IMR-90 (cell line): ENCODE measurements at regions of chr15 and their contacts with region 1.

Region 1: GRCh38 chr15:79989682-79990081 is 18.7 kb upstream of the BCL2A1 start:
- DNase-seq: peak; percentile 49
- ATAC-seq: peak; percentile 35; the same call in 1 of the 2 replicates
- H3K4me3 ChIP-seq: no peak overlapping the region
- H3K27ac ChIP-seq: no peak overlapping the region
- H3K4me1 ChIP-seq: no peaks in the 10 kb centered on the region
- H3K27me3 ChIP-seq: no peaks in the 10 kb centered on the region; the same call in 1 of the 2 replicates
- CTCF ChIP-seq: no peak
- POLR2A ChIP-seq: no peak
- RAD21 ChIP-seq: no peak

Region 2: DNA sequence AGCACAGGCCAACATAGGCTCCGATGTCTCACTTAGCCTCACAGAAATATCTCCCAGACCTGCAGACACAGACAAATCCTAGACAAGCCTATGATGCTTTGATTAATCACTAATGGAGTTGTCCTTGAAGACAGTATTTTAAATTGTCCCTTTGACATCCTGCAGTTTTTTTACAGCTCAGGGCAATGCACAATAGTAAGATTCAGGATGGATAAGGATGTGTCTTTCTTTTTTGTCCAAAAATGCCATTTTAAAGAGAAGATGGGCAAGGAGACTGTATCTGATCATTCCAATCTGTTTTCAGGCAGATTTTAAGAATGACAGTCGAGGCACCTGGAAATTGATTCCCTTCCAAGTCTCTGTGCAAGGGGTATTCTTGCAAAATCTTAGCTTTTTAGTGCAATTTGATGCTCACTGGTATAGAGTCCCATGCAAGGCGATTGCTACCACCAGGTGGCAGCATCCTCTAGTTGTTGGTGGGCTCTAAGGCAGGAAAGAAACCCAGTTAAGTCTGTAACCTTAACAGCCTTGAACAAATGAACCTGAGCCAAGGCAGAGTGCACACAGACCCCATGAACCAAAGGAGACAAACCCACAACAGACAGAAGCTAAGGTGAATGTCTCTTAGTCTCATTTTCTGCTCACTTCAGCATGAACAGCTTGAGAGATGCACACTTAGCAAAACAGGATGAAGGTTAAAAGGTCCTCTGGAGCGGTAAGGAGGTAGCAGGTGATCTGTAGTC is 608.8 kb before region 1 on chr15:
- CTCF ChIA-PET with region 1: no interaction called
- POLR2A ChIA-PET with region 1: no interaction called
- dilution Hi-C with region 1: no loop called
- in situ Hi-C with region 1: loop called (anchors 5 kb)
- intact Hi-C with region 1: loop called (anchors 1 kb)
- DNase-seq: peak; percentile 74
- ATAC-seq: peak; percentile 98
- H3K4me3 ChIP-seq: no peak overlapping the region
- H3K27ac ChIP-seq: no peak overlapping the region
- H3K4me1 ChIP-seq: no peaks in the 10 kb centered on the region
- H3K27me3 ChIP-seq: no peaks in the 10 kb centered on the region
- CTCF ChIP-seq: peak; percentile 90
- POLR2A ChIP-seq: no peak; the same call in 1 of the 2 replicates
- RAD21 ChIP-seq: peak; percentile 92

Region 3: GRCh38 chr15:79769069-79769481 is 220.6 kb before region 1 on chr15:
- CTCF ChIA-PET with region 1: no interaction called
- POLR2A ChIA-PET with region 1: no interaction called
- dilution Hi-C with region 1: no loop called
- in situ Hi-C with region 1: no loop called
- intact Hi-C with region 1: loop called (anchors 2 kb)
- DNase-seq: no peak
- ATAC-seq: peak; percentile 56
- H3K4me3 ChIP-seq: no peak overlapping the region
- H3K27ac ChIP-seq: no peak overlapping the region
- H3K4me1 ChIP-seq: no peaks in the 10 kb centered on the region
- H3K27me3 ChIP-seq: peaks cover 7% of the 10 kb centered on the region
- CTCF ChIP-seq: peak; percentile 31; the same call in 1 of the 2 replicates
- POLR2A ChIP-seq: no peak
- RAD21 ChIP-seq: peak; percentile 27; the same call in 1 of the 2 replicates

Region 4: GRCh38 chr15:79896637-79897379 is 92.9 kb before region 1 on chr15 and contains the start of gene MTHFS:
- CTCF ChIA-PET with region 1: no interaction called
- POLR2A ChIA-PET with region 1: no interaction called
- dilution Hi-C with region 1: no loop called
- in situ Hi-C with region 1: no loop called
- intact Hi-C with region 1: loop called (anchors 1 kb)
- DNase-seq: peak; percentile 56
- ATAC-seq: peak; percentile 94
- H3K4me3 ChIP-seq: peak within 1 kb of the TSS; percentile 83
- H3K27ac ChIP-seq: peak within 1 kb of the TSS; percentile 88
- H3K4me1 ChIP-seq: peaks cover 8% of the 10 kb centered on the region
- H3K27me3 ChIP-seq: no peaks in the 10 kb centered on the region
- CTCF ChIP-seq: peak; percentile 52
- POLR2A ChIP-seq: peak; percentile 70; the same call in 1 of the 2 replicates
- RAD21 ChIP-seq: peak; percentile 31; the same call in 1 of the 2 replicates
- total RNA-seq, gene MTHFS: 6.3 and 8.3 TPM in 2 replicates